ENCODE measurements at regions of chr10 and their contacts with region 1.

Region 1: DNA sequence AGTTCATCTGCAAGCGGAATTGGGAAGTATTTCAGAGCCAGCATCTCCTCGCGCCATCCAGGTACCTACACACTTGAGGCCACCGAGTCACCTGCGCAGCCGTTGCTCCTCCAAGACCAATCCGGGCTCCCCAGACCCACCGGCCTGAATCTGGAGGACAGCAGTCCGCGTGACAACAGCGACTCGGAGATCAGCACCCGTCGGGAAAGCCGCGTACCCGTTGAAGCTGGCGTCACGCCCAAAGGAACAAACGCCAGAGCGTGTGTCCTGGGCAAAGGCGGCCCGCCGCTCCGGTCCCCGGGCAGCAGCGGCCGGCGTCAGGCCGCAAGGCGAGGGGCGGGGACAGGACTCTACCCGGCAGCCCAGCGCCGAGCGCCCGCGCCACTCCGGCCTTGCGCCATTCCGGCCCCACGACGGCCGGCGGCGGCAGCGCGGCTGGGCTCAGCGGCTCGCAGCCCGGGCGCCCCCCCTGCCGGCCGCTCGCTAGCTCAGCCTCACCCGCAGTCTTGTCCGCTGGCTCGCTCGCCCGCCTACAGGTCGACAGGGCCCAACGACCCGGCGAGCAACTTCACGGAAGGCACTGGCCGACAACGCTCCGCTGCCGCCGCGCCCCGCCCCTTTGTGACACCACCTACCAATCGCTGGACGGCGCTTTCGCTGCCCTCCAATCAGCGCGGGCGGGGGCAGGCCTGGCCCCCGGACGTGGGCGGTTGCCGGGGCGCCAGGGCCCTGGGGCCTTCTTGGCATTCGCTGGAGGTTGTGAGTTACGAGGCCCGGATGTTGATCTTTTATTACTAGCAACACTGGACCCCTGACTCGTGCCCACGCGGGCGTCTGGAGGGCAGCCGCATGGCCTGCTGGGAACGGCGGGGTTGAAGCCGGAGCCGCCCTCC is at the start of gene ZFAND4:
- DNase-seq: peak; percentile 99
- ATAC-seq: peak; percentile 98 to 99 (median 98)
- H3K4me3 ChIP-seq: peak within 1 kb of the TSS; percentile 94
- H3K27ac ChIP-seq: peak within 1 kb of the TSS; percentile 91
- H3K4me1 ChIP-seq: no peaks in the 10 kb centered on the region
- H3K27me3 ChIP-seq: no peaks in the 10 kb centered on the region
- CTCF ChIP-seq: peak; percentile 73
- total RNA-seq, gene ZFAND4: 4.2 to 7.2 (median 6.5) TPM

Region 2: GRCh38 chr10:45008524-45009161 is 663.8 kb before region 1 on chr10:
- intact Hi-C with region 1: loop called in 1 of 2 experiments (anchors 10 kb)
- DNase-seq: no peak
- ATAC-seq: peak; percentile 65 to 87 (median 78)
- H3K4me3 ChIP-seq: no peak overlapping the region
- H3K27ac ChIP-seq: no peak overlapping the region
- H3K4me1 ChIP-seq: peaks cover 5% of the 10 kb centered on the region
- H3K27me3 ChIP-seq: no peaks in the 10 kb centered on the region
- CTCF ChIP-seq: peak; percentile 82

Region 3: DNA sequence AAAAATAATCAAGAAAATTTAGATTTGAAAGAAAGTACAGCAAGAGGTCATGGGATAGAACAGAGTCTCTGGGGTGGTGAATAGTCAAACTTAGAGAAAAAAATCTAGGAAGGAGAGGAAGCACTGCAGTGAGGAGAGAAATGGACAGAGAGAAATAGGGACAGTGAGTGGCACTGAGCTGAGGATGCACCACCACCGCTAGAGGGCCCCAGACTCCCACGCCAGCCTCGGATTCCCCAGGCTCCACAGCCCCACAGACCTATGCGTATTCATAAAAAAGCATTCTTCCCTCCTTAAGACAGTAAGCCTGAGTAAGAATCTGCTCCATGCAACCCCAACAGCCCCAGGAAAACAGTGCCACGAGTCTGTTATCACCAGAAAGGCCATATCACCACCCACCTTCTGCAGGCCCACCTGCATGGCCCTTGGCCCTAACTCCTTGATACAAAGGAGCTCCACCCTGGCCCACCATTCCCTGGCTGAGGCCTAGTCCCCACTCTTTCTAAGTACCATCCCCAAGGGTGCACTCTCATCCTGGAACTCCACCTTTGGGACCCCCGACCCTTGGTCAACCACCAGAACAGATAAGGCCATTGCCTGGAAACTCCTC is 207.4 kb before region 1 on chr10:
- intact Hi-C with region 1: loop called (anchors 2 to 5 kb)
- DNase-seq: peak; percentile 75 to 87
- ATAC-seq: peak; percentile 89 to 99 (median 94)
- H3K4me3 ChIP-seq: no peak overlapping the region
- H3K27ac ChIP-seq: no peak overlapping the region
- H3K4me1 ChIP-seq: no peaks in the 10 kb centered on the region
- H3K27me3 ChIP-seq: no peaks in the 10 kb centered on the region
- CTCF ChIP-seq: peak; percentile 86

Region 4: DNA sequence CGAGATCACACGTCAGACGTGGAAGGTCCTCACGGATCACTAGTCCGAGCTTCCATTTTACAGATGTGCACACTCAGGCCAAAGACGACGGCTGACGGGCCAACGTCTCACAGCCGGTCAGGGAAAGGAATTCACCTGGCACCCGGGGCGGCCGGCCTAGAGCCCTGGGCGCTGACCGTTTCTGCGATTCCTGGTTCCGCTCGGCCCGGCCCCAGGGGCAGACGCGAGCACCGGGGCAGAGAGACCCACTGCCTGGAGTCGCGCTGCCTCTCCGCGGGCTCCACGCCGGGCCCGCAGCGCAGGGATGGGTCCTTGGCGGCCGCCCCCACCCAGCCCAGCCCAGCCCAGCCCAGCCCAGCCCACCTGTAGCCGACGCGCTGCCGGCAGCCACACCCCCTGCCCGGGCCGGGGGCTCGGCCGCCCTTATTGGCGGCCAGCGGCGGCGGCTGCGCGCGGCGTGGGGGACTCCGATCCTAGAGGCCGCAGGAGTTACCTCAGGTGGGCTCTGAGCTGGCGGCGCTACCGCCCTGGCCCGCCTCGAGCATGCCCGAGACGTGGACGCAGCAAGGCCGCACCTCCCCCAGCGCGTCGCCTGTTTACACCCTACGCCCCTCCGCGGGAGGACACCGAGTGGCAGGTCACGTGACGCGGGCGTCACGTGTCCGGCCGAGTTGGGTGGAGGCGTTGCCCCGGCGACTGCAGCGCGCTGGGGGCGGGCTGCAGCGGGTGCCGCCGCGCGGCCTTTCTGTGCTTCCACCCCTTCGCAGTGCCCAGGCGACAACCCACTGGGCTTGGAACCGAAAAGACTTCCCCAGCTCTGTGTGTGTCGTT is 77.9 kb before region 1 on chr10:
- intact Hi-C with region 1: loop called in 1 of 2 experiments (anchors 5 kb)
- DNase-seq: peak; percentile 94 to 97
- ATAC-seq: peak; percentile 98 to 100 (median 100)
- H3K4me3 ChIP-seq: peak overlapping the region; percentile 82
- H3K27ac ChIP-seq: peak overlapping the region; percentile 70
- H3K4me1 ChIP-seq: peaks cover 8% of the 10 kb centered on the region
- H3K27me3 ChIP-seq: no peaks in the 10 kb centered on the region
- CTCF ChIP-seq: no peak

Region 5: DNA sequence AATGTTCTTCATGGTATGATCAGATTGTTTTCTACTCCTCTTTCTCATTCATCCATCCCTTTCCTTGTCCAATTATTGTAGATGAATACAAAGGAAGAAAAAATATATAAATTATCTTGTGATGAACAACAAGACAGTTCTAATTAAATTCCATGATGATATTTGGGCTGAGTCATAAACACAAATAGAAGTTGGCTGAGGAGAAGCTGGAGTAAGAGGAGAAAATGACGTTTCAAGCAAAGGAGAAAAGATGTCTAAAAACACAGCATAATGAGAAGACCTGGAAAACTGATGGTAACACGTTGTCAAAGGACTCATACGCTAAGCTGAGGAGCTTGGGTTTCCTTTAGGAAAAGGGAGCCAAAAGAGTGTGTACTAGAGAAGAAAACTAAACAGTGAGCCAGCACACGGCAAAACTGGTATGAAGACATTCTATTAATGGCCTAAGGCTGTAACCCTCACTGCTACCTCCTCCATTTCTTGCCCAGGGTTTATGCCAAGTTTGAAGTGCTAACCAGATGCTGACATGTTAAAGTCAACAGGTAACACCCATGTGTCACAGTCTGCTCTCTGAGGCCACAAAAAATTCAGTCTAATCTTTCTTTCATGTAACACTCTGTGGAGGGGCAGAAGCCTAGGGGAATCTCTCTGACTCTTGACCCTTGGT is 25.9 kb before region 1 on chr10:
- intact Hi-C with region 1: no loop called
- DNase-seq: no peak
- ATAC-seq: peak; percentile 63 to 93 (median 80)
- H3K4me3 ChIP-seq: no peak overlapping the region
- H3K27ac ChIP-seq: peak overlapping the region; percentile 71
- H3K4me1 ChIP-seq: peaks cover 8% of the 10 kb centered on the region
- H3K27me3 ChIP-seq: no peaks in the 10 kb centered on the region
- CTCF ChIP-seq: no peak

Measured in psoas muscle (tissue), 8 donors.